ENCODE measurements at regions of chr9 and their contacts with region 1.

Region 1: GRCh38 chr9:75890472-75891276 is at the start of gene PCSK5:
- DNase-seq: peak; percentile 95 to 96
- ATAC-seq: peak; percentile 97
- H3K4me3 ChIP-seq: peak within 1 kb of the TSS; percentile 87 to 90
- H3K27ac ChIP-seq: peak within 1 kb of the TSS; percentile 51 to 87
- H3K4me1 ChIP-seq: peaks cover 2 to 5% of the 10 kb centered on the region in 2 donors
- H3K27me3 ChIP-seq: no peaks in the 10 kb centered on the region
- total RNA-seq, gene PCSK5: 37.5 to 47.5 TPM

Region 2: GRCh38 chr9:76004526-76004925 is 113.9 kb after region 1 on chr9:
- intact Hi-C with region 1: loop called in 1 of 2 experiments (anchors 5 kb)
- DNase-seq: no peak
- ATAC-seq: no peak
- H3K4me3 ChIP-seq: no peak overlapping the region
- H3K27ac ChIP-seq: no peak overlapping the region
- H3K4me1 ChIP-seq: peaks cover 0 to 1% of the 10 kb centered on the region in 2 donors
- H3K27me3 ChIP-seq: no peaks in the 10 kb centered on the region

Region 3: DNA sequence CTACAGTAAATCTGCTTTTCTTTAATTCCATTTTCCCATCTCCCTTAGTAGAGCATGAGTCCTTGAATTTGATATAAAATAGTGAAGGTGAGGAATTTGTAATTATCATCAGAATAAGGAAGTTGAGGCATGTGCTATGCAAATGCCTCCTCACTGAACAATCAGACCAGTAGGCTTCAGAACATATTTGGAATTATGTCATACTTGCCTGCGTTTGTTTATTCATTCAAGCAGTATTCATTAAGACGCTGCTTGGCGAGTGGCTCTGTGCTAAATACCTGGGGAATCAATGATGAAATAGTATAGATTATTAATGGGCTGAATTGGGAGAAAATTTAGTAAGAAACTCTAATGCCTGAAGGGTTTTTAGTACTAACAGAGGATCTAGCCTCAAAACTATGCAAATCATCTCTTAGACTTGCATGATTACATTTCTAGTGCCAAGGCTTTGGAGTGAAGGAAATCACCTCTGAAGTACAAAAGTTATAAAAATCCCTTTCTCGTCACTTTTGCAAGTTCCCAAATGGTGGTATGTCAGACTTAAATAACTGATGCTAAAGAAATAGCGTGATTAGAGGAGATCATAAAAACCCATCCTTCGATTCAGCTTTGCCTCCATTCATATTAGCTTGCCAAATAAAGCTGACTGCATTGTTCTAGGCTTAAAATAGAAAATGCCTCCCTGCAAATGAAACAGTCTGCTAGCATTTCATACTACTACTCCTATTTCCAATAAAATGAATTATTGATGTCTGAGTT is 141.5 kb after region 1 on chr9:
- intact Hi-C with region 1: loop called in 1 of 2 experiments (anchors 1 kb)
- DNase-seq: no peak
- ATAC-seq: no peak
- H3K4me3 ChIP-seq: peak overlapping the region; percentile 36 to 59
- H3K27ac ChIP-seq: peak overlapping the region in 1 of 2 donors; percentile 33
- H3K4me1 ChIP-seq: no peaks in the 10 kb centered on the region
- H3K27me3 ChIP-seq: no peaks in the 10 kb centered on the region

Region 4: GRCh38 chr9:76161541-76161940 is 270.9 kb after region 1 on chr9:
- intact Hi-C with region 1: loop called in 1 of 2 experiments (anchors 5 kb)
- DNase-seq: no peak
- ATAC-seq: peak; percentile 57
- H3K4me3 ChIP-seq: no peak overlapping the region
- H3K27ac ChIP-seq: peak overlapping the region in 1 of 2 donors; percentile 89
- H3K4me1 ChIP-seq: peaks cover 3 to 7% of the 10 kb centered on the region in 2 donors
- H3K27me3 ChIP-seq: no peaks in the 10 kb centered on the region

Region 5: GRCh38 chr9:76297721-76298239 is 407.1 kb after region 1 on chr9:
- intact Hi-C with region 1: loop called in 1 of 2 experiments (anchors 5 kb)
- DNase-seq: peak in 1 of 2 donors; percentile 61
- ATAC-seq: peak; percentile 77
- H3K4me3 ChIP-seq: no peak overlapping the region
- H3K27ac ChIP-seq: no peak overlapping the region
- H3K4me1 ChIP-seq: no peaks in the 10 kb centered on the region
- H3K27me3 ChIP-seq: no peaks in the 10 kb centered on the region

Measured in aorta (tissue), 5 donors.